Sigmoid colon (tissue), 7 donors: ENCODE measurements at regions of chr2 and their contacts with region 1.

Region 1: GRCh38 chr2:66434679-66435548 is at the start of gene MEIS1:
- DNase-seq: peak; percentile 99
- H3K4me3 ChIP-seq: peak within 1 kb of the TSS; percentile 62 to 87 (median 84)
- H3K27ac ChIP-seq: peak within 1 kb of the TSS; percentile 93 to 99 (median 98)
- H3K4me1 ChIP-seq: peaks cover 0 to 25% (median 17%) of the 10 kb centered on the region in 4 donors
- H3K27me3 ChIP-seq: no peaks in the 10 kb centered on the region
- CTCF ChIP-seq: no peak
- EP300 ChIP-seq: peak in 2 of 4 donors; percentile 35 to 60
- POLR2A ChIP-seq: peak; percentile 93 to 98
- total RNA-seq, gene MEIS1: 108 to 144 (median 128) TPM

Region 2: DNA sequence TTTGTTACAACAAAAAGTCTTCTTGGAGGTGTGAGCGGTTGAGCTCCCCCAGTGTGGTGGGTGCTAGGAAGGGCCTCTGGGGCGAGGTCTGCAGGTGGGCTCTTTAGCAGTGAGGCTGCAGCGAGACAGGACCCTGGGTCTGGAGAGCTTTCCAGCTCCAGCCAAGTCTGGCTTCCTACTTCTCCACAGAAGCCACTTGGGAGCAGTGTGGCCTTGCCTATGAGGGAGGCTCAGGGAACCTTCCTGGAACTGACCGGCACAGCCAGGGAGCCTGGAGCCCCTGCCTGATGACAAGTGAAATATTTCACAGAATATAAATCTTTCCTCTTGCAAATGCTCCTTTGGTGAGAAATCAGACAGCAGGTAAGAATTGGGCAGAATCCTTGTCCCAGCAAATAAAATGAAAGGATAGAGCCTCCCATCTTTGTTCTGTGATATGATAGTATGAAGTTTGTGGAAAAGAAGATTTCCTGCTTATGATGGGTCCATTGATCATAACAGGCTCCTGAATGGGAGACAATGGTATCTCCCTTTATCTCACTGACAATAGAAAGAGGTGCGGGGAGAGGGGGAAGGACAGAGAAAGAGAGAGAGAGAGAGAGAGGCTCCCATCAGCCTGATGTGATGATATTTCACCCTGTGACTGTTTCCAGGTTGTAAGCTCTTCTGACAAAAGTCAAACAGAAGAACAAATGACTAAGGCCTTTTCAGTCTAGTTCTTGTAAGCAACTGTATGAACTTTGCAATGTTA is 712.7 kb before region 1 on chr2:
- intact Hi-C with region 1: loop called (anchors 5 kb)
- DNase-seq: peak; percentile 81
- H3K4me3 ChIP-seq: no peak overlapping the region
- H3K27ac ChIP-seq: no peak overlapping the region
- H3K4me1 ChIP-seq: peaks cover 0 to 6% (median 0%) of the 10 kb centered on the region in 4 donors
- H3K27me3 ChIP-seq: no peaks in the 10 kb centered on the region
- CTCF ChIP-seq: peak in 3 of 4 experiments; percentile 9 to 37 (median 29)
- EP300 ChIP-seq: no peak
- POLR2A ChIP-seq: no peak

Region 3: GRCh38 chr2:66555501-66556324 is 120.8 kb after region 1 on chr2:
- intact Hi-C with region 1: no loop called
- DNase-seq: no peak
- H3K4me3 ChIP-seq: peak overlapping the region in 3 of 4 donors; percentile 13 to 29 (median 27)
- H3K27ac ChIP-seq: peak overlapping the region; percentile 64 to 82 (median 70)
- H3K4me1 ChIP-seq: peaks cover 0 to 83% (median 69%) of the 10 kb centered on the region in 4 donors
- H3K27me3 ChIP-seq: no peaks in the 10 kb centered on the region
- CTCF ChIP-seq: no peak
- EP300 ChIP-seq: no peak
- POLR2A ChIP-seq: no peak

Region 4: GRCh38 chr2:66851449-66851872 is 416.5 kb after region 1 on chr2:
- intact Hi-C with region 1: loop called (anchors 5 kb)
- DNase-seq: peak; percentile 81
- H3K4me3 ChIP-seq: no peak overlapping the region
- H3K27ac ChIP-seq: peak overlapping the region in 3 of 4 donors; percentile 87 to 91 (median 89)
- H3K4me1 ChIP-seq: peaks cover 0 to 64% (median 58%) of the 10 kb centered on the region in 4 donors
- H3K27me3 ChIP-seq: no peaks in the 10 kb centered on the region
- CTCF ChIP-seq: no peak
- EP300 ChIP-seq: peak in 1 of 4 donors; percentile 50
- POLR2A ChIP-seq: no peak

Region 5: GRCh38 chr2:66994654-66995053 is 559.7 kb after region 1 on chr2:
- intact Hi-C with region 1: loop called (anchors 10 kb)
- DNase-seq: no peak
- H3K4me3 ChIP-seq: no peak overlapping the region
- H3K27ac ChIP-seq: peak overlapping the region in 3 of 4 donors; percentile 67 to 78 (median 77)
- H3K4me1 ChIP-seq: peaks cover 0 to 43% (median 19%) of the 10 kb centered on the region in 4 donors
- H3K27me3 ChIP-seq: no peaks in the 10 kb centered on the region
- CTCF ChIP-seq: no peak
- EP300 ChIP-seq: no peak
- POLR2A ChIP-seq: no peak

Region 6: DNA sequence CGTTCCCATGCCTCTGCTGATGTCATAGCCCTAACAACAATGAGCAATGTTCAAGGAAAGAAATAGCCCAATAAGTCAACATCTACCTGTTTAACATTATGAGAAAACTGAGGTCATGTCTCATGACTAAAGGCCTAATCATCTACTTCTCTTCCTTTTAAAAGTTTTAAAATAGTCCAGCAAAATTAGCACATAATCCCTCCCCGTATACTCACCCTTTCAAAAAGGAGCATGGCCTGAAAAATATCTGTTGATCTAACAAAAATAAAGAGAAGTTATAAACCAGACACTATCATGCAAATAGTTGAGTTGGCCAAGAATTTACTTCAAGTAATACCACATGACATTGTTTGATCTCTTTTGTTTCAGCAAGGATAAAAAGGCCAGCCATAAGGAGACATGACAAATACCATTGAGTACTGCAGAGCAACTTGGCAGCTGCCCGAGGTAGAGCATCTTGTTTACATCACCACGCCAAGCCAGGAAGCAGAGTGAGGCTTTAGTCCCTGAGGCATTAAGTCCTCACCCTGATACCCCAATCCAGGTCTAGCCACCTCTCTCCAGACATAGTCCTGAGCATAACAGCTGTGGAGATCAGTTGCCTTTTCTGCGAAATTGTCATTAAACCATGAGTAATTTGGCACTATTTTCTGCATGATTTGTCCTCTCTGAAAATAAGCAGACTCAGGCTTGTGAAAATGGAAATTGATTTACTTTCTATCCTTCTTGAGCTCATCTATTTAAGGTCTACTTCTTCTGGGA is 824.8 kb after region 1 on chr2:
- intact Hi-C with region 1: loop called (anchors 2 kb)
- DNase-seq: peak; percentile 94
- H3K4me3 ChIP-seq: no peak overlapping the region
- H3K27ac ChIP-seq: peak overlapping the region; percentile 84 to 89 (median 86)
- H3K4me1 ChIP-seq: peaks cover 0 to 28% (median 19%) of the 10 kb centered on the region in 4 donors
- H3K27me3 ChIP-seq: no peaks in the 10 kb centered on the region
- CTCF ChIP-seq: no peak
- EP300 ChIP-seq: peak; percentile 51 to 86 (median 62)
- POLR2A ChIP-seq: no peak

Region 7: DNA sequence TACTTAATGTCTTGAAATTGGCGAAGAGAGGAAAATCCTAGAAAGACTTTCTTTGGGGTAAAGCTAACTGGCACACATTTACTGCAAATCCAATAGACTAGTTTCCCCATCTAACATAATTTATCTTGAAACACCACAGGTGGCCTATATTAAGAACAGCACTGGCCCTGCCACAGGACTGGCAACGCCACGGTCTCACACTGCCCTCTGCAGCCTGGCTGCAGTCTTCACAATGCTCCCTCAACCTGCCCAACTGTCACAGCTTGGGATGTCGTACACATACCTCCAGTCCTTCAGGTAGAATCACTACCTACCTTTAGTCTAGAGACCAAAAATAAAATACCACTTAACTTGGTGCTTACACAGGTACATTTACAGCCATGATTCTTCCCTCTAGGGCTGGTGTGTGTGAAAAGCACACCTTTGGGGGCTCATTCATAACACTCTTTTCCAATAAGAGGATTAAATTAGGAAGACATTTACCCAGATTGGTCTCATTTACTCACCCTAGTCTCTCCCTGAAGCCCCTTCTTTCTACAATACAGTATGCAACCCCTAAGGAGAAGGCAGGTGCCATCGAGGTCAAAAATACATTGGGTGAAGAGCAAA is 1405.7 kb after region 1 on chr2:
- intact Hi-C with region 1: loop called (anchors 5 kb)
- DNase-seq: peak; percentile 85
- H3K4me3 ChIP-seq: no peak overlapping the region
- H3K27ac ChIP-seq: peak overlapping the region in 1 of 4 donors; percentile 29
- H3K4me1 ChIP-seq: peaks cover 0 to 18% (median 1%) of the 10 kb centered on the region in 4 donors
- H3K27me3 ChIP-seq: no peaks in the 10 kb centered on the region
- CTCF ChIP-seq: peak; percentile 59 to 84 (median 79)
- EP300 ChIP-seq: no peak
- POLR2A ChIP-seq: no peak